PC-3 (cell line): ENCODE measurements at regions of chr11 and their contacts with region 1.

Region 1: DNA sequence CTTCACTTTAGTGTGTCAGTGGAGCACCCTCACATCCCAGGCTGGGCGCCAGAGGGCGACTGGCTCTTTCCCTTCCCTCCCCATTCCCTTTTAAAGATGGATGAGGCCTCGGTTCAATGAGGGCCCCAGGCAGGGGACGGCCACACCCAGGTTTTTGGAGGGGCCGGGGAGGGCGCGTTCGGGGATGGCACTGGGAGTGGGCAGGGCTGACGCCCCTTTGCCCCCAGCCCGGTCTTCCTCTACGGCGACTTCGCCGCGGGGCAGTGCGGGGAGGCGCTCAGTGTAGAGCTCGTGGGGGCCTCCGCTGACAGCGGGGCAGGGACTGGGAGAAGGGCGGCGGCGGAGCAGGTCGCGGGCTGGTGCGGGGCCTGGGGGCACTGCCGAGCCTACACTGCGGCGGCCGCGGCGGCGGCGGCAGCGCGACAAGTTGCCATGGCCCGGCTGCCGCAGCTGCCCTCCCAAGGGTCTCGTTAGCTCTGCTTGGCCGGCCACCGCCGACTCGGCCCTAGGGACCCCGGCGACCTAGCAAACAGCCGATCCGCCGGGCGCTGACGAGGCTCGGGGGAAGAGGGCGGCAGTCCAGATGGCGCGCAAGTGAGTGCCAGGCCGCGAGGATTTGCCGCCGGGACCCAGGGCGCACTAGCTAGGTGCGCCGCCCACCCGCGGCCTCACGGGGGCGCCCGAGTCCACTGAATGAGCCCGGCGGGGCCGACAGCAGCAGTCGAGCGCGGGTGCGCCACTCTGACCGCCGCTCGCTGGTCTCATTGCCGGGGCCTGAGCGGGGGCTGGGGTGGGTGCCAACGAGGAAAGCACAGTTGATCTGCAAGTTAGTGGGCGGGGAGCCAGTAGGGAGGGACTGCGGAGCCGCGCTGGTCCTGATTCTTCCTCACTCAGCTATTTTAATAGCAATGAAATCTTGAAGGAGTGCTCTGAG is 92.7 kb downstream of the RRM1 start:
- DNase-seq: peak; percentile 83
- ATAC-seq: peak; percentile 92
- H3K4me3 ChIP-seq: peak overlapping the region; percentile 80
- H3K27ac ChIP-seq: no peak overlapping the region
- H3K4me1 ChIP-seq: no peaks in the 10 kb centered on the region; the same call in 1 of the 2 replicates
- H3K27me3 ChIP-seq: no peaks in the 10 kb centered on the region
- CTCF ChIP-seq: peak; percentile 78

Region 2: DNA sequence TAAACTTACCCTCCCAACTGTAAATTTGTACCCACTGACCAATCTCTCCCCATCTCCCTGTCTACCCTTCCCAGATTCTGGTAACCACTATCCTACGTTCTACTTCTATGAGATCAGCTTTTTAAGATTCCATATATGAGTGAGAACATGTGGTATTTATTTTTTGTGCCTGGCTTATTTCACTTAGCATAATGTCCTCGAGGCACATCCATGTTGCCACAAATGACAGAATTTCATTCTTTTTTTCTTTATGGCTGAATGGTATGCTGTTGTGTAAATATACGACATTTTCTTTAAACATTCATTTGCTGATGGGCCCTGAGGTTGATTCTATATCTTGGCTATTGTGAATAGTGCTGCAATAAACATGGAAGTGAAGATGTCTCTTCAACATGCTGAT is 167.4 kb before region 1 on chr11:
- CTCF ChIA-PET with region 1: no interaction called
- POLR2A ChIA-PET with region 1: no interaction called
- intact Hi-C with region 1: no loop called
- DNase-seq: no peak
- ATAC-seq: no peak
- H3K4me3 ChIP-seq: no peak overlapping the region
- H3K27ac ChIP-seq: no peak overlapping the region
- H3K4me1 ChIP-seq: no peaks in the 10 kb centered on the region
- H3K27me3 ChIP-seq: no peaks in the 10 kb centered on the region
- CTCF ChIP-seq: no peak

Region 3: DNA sequence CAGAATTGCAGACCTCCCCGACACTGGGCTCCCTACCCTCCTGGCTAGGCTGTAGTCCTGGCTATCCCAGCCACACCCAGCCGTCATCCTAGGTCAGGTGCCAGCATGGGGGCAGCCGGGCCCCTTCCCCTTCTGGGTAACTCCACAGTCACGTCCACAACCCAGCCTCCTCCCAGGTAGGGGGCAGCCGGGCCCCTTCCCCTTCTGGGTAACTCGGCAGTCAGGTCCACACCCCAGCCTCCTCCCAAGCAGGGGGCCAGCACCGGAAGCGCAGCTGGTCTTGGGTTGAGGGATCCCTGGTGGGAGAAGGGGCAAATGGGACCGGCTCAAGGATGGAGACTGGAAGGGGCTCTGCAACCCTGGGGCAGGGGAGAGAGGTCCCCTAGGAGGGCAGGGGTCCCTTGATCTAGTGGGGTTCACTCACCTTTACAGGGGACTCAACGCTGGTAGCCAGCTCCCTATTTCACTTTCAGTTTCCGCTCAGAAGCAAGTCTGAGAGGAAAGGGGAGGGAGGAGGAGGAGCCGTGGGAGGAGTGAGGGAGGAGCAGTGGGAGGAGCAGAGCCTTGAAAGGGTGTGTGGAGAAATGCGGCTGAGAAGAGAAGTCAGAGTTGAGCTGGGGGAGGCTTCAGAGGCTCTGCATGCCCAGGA is 206.0 kb after region 1 on chr11 and contains the start of gene TRIM21:
- CTCF ChIA-PET with region 1: no interaction called
- POLR2A ChIA-PET with region 1: no interaction called
- intact Hi-C with region 1: loop called (anchors 1 kb)
- DNase-seq: peak; percentile 79
- ATAC-seq: peak; percentile 100
- H3K4me3 ChIP-seq: peak within 1 kb of the TSS; percentile 99
- H3K27ac ChIP-seq: no peak within 1 kb of the TSS
- H3K4me1 ChIP-seq: no peaks in the 10 kb centered on the region; the same call in 1 of the 2 replicates
- H3K27me3 ChIP-seq: no peaks in the 10 kb centered on the region
- CTCF ChIP-seq: no peak
- total RNA-seq, gene TRIM21: 6.9 and 7.6 TPM in 2 replicates

Region 4: DNA sequence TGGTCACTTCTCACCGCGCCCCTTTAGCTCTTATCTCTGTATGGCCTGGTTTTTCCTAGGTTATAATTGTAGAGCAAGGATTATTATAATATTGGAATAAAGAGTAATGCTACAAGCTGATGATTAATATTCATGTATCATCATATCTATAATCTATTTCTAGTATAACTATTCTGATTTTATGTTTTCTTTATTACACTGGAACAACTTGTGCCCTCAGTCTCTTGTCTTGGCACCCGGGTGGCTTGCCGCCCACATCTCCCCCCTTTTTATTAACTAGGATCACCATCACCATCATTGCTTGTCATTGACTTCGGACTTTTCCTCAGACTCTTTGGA is 306.1 kb after region 1 on chr11:
- CTCF ChIA-PET with region 1: interaction called, 25 read pairs
- POLR2A ChIA-PET with region 1: no interaction called
- intact Hi-C with region 1: loop called (anchors 1 kb)
- DNase-seq: no peak
- ATAC-seq: no peak
- H3K4me3 ChIP-seq: no peak overlapping the region
- H3K27ac ChIP-seq: no peak overlapping the region
- H3K4me1 ChIP-seq: no peaks in the 10 kb centered on the region
- H3K27me3 ChIP-seq: peaks cover 47% of the 10 kb centered on the region
- CTCF ChIP-seq: no peak; the same call in none of the 2 replicates

Region 5: DNA sequence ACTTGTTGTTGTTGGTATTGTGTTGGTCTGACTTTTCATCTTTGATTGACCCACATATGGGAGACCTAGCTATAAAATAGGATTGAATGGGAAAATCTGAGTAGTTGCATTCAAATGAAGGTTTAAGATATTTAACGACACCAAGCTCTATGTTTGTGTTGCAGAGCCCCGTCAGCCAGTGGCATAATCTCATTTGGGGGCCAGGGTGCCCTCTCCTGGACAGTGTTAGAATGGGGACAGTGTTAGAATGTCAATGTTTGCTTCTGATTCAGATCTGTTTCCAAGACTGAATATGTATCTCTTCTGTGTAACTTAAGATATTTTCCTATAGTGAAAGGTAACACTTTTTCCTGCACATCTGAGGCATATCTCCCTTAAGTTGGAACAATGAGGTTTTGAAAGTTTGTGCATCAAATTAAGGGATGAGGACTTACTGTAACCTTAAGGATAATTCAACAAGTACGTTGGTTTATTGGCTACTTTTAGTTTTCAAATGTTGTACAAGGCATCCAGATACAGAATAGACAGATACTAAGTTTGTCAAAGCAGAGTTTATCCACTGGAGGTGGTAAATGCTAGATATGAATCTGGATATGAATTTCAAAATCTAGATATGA is 352.4 kb after region 1 on chr11:
- CTCF ChIA-PET with region 1: interaction called, 18 read pairs
- POLR2A ChIA-PET with region 1: no interaction called
- intact Hi-C with region 1: loop called (anchors 1 kb)
- DNase-seq: peak; percentile 63
- ATAC-seq: peak; percentile 83
- H3K4me3 ChIP-seq: no peak overlapping the region
- H3K27ac ChIP-seq: no peak overlapping the region
- H3K4me1 ChIP-seq: peaks cover 6% of the 10 kb centered on the region; the same call in 1 of the 2 replicates
- H3K27me3 ChIP-seq: no peaks in the 10 kb centered on the region
- CTCF ChIP-seq: peak; percentile 84